ENCODE measurements at regions of chr17 and their contacts with region 1.

Region 1: DNA sequence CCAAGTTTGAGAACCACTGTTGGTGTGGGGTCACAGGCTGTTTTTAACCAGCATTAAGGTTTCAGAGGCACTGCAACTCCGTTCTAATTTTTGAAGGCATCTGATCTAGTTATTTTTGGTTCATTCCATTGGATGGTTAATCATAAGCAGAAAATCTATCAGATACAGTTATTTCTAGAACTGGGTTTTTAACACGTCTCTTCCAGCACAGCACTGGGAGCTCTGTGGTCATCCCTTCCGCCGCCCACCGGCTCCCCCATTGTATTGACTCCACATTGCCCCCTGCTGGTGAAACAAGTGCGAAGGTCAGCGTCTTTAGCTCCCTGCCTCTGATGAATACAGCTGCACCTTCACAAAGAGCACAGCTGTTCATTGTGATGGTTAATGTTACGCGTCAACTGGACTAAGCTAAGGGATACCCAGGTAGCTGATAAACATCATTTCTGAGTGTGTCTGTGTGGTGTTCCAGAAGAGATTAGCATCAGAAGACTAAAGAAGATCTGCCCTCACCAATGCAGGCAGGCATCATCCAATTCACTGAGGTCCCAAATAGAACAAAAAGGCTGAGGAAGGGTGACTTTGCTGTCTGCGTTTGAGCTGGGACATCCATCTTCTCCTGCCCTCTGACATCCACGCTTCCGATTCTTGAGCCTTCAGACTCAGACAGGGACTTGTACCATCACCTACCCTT is 8.5 kb downstream of the CCL18 start:
- DNase-seq: peak; percentile 72
- H3K4me3 Mint-ChIP-seq: no peak overlapping the region
- H3K27ac Mint-ChIP-seq: peak overlapping the region; percentile 27
- H3K4me1 Mint-ChIP-seq: peaks cover 31% of the 10 kb centered on the region
- H3K27me3 Mint-ChIP-seq: peaks cover 8% of the 10 kb centered on the region

Region 2: GRCh38 chr17:35915153-35915969 is 157.2 kb before region 1 on chr17:
- CTCF ChIA-PET with region 1: no interaction called
- POLR2A ChIA-PET with region 1: no interaction called
- DNase-seq: no peak
- H3K4me3 Mint-ChIP-seq: no peak overlapping the region
- H3K27ac Mint-ChIP-seq: no peak overlapping the region
- H3K4me1 Mint-ChIP-seq: peaks cover 31% of the 10 kb centered on the region
- H3K27me3 Mint-ChIP-seq: no peaks in the 10 kb centered on the region

Region 3: GRCh38 chr17:35969558-35970380 is 102.8 kb before region 1 on chr17:
- CTCF ChIA-PET with region 1: interaction called, 31 read pairs
- POLR2A ChIA-PET with region 1: no interaction called
- DNase-seq: peak; percentile 80
- H3K4me3 Mint-ChIP-seq: no peak overlapping the region
- H3K27ac Mint-ChIP-seq: no peak overlapping the region
- H3K4me1 Mint-ChIP-seq: peaks cover 2% of the 10 kb centered on the region
- H3K27me3 Mint-ChIP-seq: no peaks in the 10 kb centered on the region

Region 4: DNA sequence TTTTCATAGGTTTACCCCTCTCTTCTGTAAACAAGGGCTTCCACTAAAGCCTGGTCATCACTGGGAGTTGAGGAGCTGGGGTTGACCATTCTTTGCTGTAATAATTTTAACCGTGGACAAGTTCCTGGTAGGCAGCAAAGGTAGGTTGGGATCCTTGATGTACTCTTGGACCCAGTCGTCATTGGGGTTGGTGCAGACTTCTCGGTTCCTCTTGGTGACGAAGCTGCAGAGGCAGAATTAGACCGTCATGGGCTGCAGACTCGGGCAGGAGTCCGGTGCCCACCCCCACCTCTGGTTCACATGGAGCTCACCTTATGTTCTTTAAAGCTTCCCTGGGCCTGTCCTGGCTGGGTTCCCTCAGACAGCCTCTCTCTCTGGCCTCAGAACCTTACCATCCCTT is 95.1 kb before region 1 on chr17:
- CTCF ChIA-PET with region 1: interaction called, 31 read pairs
- POLR2A ChIA-PET with region 1: no interaction called
- DNase-seq: no peak
- H3K4me3 Mint-ChIP-seq: no peak overlapping the region
- H3K27ac Mint-ChIP-seq: no peak overlapping the region
- H3K4me1 Mint-ChIP-seq: no peaks in the 10 kb centered on the region
- H3K27me3 Mint-ChIP-seq: no peaks in the 10 kb centered on the region

Region 5: GRCh38 chr17:36085765-36086164 is 13.2 kb after region 1 on chr17:
- CTCF ChIA-PET with region 1: interaction called, 10 read pairs
- POLR2A ChIA-PET with region 1: interaction called, 9 read pairs
- DNase-seq: no peak
- H3K4me3 Mint-ChIP-seq: no peak overlapping the region
- H3K27ac Mint-ChIP-seq: peak overlapping the region; percentile 19
- H3K4me1 Mint-ChIP-seq: peaks cover 75% of the 10 kb centered on the region
- H3K27me3 Mint-ChIP-seq: peaks cover 3% of the 10 kb centered on the region

Region 6: GRCh38 chr17:36148559-36149295 is 76.2 kb after region 1 on chr17:
- CTCF ChIA-PET with region 1: interaction called, 25 read pairs
- POLR2A ChIA-PET with region 1: no interaction called
- DNase-seq: peak; percentile 81
- H3K4me3 Mint-ChIP-seq: no peak overlapping the region
- H3K27ac Mint-ChIP-seq: no peak overlapping the region
- H3K4me1 Mint-ChIP-seq: peaks cover 23% of the 10 kb centered on the region
- H3K27me3 Mint-ChIP-seq: peaks cover 40% of the 10 kb centered on the region